ENCODE measurements at regions of chr9 and their contacts with region 1.

Region 1: DNA sequence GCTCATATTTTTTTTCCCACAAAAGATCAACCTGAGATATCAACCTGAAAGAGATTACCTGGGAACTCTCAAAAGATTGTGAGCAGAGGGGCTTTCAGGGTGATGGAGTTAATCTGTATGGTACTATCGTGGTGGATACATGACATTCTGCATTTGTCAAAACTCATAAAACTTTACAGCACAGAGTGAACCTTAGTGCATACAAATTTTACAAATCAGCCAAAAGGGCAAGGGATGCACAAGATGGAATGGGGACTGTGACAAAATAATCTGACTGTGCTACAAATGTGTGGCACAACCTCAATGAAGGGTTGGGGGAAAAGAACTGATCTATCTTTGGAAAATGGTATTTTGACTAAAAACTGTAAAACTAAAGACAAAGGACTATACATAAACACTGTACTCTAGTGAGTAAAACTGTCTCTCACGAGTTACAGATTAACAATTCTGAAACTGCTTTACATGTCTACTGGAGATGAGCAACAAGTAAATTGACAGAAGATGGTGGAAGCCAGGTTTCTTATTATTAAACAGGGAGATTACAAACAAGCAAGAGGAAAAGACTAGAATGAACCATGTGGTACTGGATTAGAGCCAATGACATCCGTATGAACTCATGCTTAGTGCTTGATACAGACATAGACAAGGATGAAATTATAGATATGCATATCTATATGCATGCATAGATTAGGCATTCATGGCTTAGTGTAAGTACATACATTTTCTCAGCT is 24.8 kb upstream of the RLN1 start:
- DNase-seq: no peak
- ATAC-seq: no peak
- H3K4me3 ChIP-seq: no peak overlapping the region
- H3K4me3 Mint-ChIP-seq: no peak overlapping the region
- H3K27ac ChIP-seq: no peak overlapping the region
- H3K27ac Mint-ChIP-seq: no peak overlapping the region
- H3K4me1 ChIP-seq: no peaks in the 10 kb centered on the region
- H3K4me1 Mint-ChIP-seq: peaks cover 8% of the 10 kb centered on the region
- H3K27me3 ChIP-seq: no peaks in the 10 kb centered on the region
- H3K27me3 Mint-ChIP-seq: no peaks in the 10 kb centered on the region
- CTCF ChIP-seq: no peak

Region 2: GRCh38 chr9:5416962-5417361 is 52.5 kb after region 1 on chr9:
- CTCF ChIA-PET with region 1: no interaction called
- POLR2A ChIA-PET with region 1: no interaction called
- intact Hi-C with region 1: loop called in 1 of 2 experiments (anchors 10 kb)
- DNase-seq: no peak
- ATAC-seq: no peak
- H3K4me3 ChIP-seq: no peak overlapping the region
- H3K4me3 Mint-ChIP-seq: no peak overlapping the region
- H3K27ac ChIP-seq: no peak overlapping the region
- H3K27ac Mint-ChIP-seq: no peak overlapping the region
- H3K4me1 ChIP-seq: no peaks in the 10 kb centered on the region
- H3K4me1 Mint-ChIP-seq: peaks cover 12% of the 10 kb centered on the region
- H3K27me3 ChIP-seq: no peaks in the 10 kb centered on the region
- H3K27me3 Mint-ChIP-seq: no peaks in the 10 kb centered on the region
- CTCF ChIP-seq: no peak

Measured in CD8-positive, alpha-beta T cell (primary cell).